ENCODE measurements at regions of chr5 and their contacts with region 1.

Region 1: DNA sequence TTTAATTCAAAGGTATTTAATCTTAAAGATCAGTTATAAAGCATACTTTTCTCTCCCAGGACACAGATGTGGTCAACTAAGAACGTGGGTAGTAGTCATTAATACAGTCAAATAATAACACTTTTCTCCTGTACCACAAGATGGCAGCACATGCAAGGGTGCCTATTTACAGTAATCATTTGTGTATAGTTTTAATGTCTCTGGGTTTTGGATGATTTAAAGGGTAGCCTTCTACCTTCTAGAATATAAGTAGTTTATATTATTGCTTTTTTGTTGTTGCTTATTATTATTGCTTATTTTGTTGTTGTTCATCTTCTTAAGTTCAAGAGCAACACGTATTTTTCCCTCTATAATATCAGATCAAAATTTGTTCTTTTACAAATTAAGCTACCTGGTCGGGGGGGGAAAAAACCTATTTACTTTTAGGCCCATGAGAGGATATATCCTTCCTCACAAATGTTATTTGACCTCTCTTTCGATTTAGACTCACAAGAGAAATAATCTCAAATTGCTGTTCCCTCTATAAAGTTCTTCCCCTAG is 59.6 kb upstream of the SLC27A6 start:
- DNase-seq: peak; percentile 58
- ATAC-seq: peak; percentile 89
- H3K4me3 ChIP-seq: no peak overlapping the region
- H3K27ac ChIP-seq: no peak overlapping the region
- H3K4me1 ChIP-seq: no peaks in the 10 kb centered on the region
- H3K27me3 ChIP-seq: no peaks in the 10 kb centered on the region
- CTCF ChIP-seq: peak; percentile 84
- POLR2A ChIP-seq: no peak
- RAD21 ChIP-seq: peak; percentile 78

Region 2: DNA sequence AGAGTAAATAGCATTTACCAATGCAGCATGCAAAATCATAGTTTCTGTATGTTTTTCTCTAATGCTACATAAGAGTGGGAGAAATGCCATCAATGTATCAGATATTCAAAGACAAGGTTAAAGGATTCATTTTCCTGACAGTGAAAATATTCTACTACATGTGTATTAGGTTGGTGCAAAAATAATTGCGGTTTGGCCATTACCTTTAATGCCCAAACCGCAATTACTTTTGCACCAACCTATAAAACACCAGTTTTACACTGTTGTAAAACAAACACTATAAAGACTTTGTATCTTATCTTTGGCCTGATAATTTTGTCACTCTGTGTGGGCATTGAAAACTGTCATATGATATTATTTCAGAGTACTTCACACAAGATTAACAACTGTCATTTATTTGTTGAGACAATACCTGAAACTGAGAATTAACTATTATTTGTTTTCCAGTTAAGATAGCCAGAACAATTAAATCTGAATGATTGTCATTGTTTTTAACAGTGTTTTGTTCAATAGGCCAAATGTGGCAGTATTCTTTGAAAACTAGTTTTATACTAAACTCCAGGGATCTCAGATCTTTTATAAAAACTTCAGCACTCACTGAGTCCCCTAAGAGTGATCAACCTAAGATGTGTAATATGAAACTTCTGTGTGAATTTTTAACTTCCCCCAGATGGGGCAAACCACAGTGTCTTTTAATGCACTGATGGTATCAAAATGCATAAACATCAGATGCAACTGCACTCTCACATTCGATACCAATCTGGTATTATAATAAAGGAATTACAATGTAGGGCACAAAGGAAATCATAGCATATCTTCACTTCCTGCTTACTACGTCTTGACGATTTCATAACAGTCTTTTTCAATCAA is 313.8 kb before region 1 on chr5:
- CTCF ChIA-PET with region 1: no interaction called
- POLR2A ChIA-PET with region 1: no interaction called
- dilution Hi-C with region 1: no loop called
- in situ Hi-C with region 1: no loop called
- intact Hi-C with region 1: no loop called
- DNase-seq: no peak
- ATAC-seq: no peak
- H3K4me3 ChIP-seq: no peak overlapping the region
- H3K27ac ChIP-seq: no peak overlapping the region
- H3K4me1 ChIP-seq: peaks cover 2% of the 10 kb centered on the region
- H3K27me3 ChIP-seq: no peaks in the 10 kb centered on the region
- CTCF ChIP-seq: no peak
- POLR2A ChIP-seq: no peak
- RAD21 ChIP-seq: no peak

Region 3: DNA sequence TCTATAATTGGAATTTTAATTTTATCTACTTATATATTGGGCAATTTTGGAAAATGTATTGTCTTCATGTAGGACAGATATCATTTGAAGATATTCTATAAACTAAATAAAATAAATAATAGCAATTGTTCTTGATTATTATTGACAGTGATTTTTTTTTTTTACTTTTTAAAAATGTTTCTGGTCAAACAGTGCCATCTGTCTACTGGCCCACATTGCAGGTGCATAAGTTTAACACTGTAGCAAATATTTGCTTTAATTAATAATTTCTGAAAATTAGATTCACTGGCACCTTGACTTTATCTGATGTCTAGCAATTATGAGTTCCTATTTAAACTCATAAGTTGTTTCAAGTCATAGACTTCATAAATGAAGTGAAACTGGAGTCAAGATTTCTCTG is 147.8 kb after region 1 on chr5:
- CTCF ChIA-PET with region 1: interaction called, 4 read pairs
- POLR2A ChIA-PET with region 1: no interaction called
- dilution Hi-C with region 1: no loop called
- in situ Hi-C with region 1: no loop called
- intact Hi-C with region 1: loop called (anchors 1 kb)
- DNase-seq: no peak
- ATAC-seq: no peak
- H3K4me3 ChIP-seq: no peak overlapping the region
- H3K27ac ChIP-seq: no peak overlapping the region
- H3K4me1 ChIP-seq: no peaks in the 10 kb centered on the region
- H3K27me3 ChIP-seq: no peaks in the 10 kb centered on the region
- CTCF ChIP-seq: no peak
- POLR2A ChIP-seq: no peak
- RAD21 ChIP-seq: no peak

Region 4: DNA sequence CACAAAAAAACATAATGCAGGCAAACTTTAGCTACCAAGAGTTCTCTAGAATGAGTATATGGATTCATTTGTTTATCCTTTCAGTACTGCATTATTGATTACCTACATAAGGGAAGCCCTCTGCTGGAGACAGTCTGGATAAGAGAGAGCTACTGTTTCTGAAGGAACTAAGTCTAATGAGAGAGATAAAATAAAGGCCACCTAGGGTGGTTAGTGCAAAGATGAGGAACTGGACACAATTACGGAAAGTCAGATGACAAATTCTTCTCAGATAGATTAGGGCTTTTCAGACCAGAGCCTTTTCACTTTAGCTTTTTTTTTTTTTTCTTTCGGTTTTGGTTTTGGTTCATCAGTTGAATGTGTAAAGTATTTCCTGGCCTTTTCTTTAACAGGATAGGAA is 220.2 kb after region 1 on chr5:
- CTCF ChIA-PET with region 1: interaction called, 3 read pairs
- POLR2A ChIA-PET with region 1: no interaction called
- dilution Hi-C with region 1: no loop called
- in situ Hi-C with region 1: loop called (anchors 10 kb)
- intact Hi-C with region 1: loop called (anchors 1 kb)
- DNase-seq: no peak
- ATAC-seq: no peak
- H3K4me3 ChIP-seq: no peak overlapping the region
- H3K27ac ChIP-seq: no peak overlapping the region
- H3K4me1 ChIP-seq: no peaks in the 10 kb centered on the region
- H3K27me3 ChIP-seq: no peaks in the 10 kb centered on the region
- CTCF ChIP-seq: no peak
- POLR2A ChIP-seq: no peak
- RAD21 ChIP-seq: no peak

Region 5: GRCh38 chr5:129844764-129845163 is 939.1 kb after region 1 on chr5:
- CTCF ChIA-PET with region 1: no interaction called
- POLR2A ChIA-PET with region 1: no interaction called
- dilution Hi-C with region 1: no loop called
- in situ Hi-C with region 1: no loop called
- intact Hi-C with region 1: loop called (anchors 2 kb)
- DNase-seq: no peak
- ATAC-seq: no peak
- H3K4me3 ChIP-seq: no peak overlapping the region
- H3K27ac ChIP-seq: no peak overlapping the region
- H3K4me1 ChIP-seq: no peaks in the 10 kb centered on the region
- H3K27me3 ChIP-seq: no peaks in the 10 kb centered on the region
- CTCF ChIP-seq: no peak
- POLR2A ChIP-seq: no peak
- RAD21 ChIP-seq: no peak